ENCODE measurements at regions of chr15 and their contacts with region 1.

Region 1: DNA sequence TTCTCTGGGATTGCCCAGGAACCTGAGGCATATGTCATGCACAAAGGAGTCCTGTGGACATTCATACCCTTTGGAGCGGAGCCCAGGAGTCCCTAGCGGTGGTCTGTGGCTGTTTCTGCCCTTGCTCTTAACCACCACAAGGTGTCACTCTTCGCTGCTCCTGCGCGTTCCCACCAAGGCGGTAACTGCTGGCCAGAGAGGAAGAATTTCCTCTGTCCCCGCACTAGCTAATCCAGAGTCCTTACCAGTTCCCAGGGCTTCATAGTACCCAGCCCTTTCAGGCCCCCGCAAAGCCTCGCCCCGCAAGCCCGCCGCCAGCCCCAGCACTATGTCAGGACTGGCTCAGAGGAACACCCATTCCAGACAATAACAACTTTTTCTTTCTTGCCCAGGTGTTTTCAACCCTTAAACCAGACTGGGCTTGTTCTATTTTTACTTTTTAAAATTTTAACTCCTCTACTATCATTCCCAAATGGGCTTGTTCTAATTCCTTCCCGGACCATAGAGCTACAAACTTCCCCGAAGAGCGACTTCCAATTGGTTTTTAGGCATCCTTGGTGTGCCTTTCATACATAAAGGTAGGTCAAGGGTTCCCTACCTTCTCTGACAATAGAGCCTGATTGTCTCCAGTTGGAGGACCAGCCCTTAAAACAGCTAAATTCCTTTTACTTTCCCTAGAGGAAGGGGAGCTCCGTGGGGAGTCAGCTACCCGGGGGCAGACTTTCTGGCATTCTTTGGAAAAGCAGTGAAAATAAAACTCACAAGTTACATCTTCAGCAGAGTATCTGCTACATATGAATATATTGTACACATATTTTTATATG is 31.8 kb upstream of the ZNF774 start:
- DNase-seq: peak; percentile 95

Region 2: GRCh38 chr15:90482124-90483011 is 162.1 kb after region 1 on chr15:
- in situ Hi-C with region 1: loop called (anchors 25 kb)
- DNase-seq: peak; percentile 67